BJ (cell line): ENCODE measurements at regions of chr18 and their contacts with region 1.

Region 1: GRCh38 chr18:75612456-75612855 is 185.0 kb upstream of the SMIM21 start:
- DNase-seq: no peak
- H3K4me3 ChIP-seq: no peak overlapping the region
- H3K27me3 ChIP-seq: no peaks in the 10 kb centered on the region
- CTCF ChIP-seq: no peak

Region 2: GRCh38 chr18:75507636-75508035 is 104.8 kb before region 1 on chr18:
- CTCF ChIA-PET with region 1: no interaction called
- POLR2A ChIA-PET with region 1: no interaction called
- DNase-seq: no peak
- H3K4me3 ChIP-seq: no peak overlapping the region
- H3K27me3 ChIP-seq: no peaks in the 10 kb centered on the region; the same call in 1 of the 2 replicates
- CTCF ChIP-seq: no peak

Region 3: DNA sequence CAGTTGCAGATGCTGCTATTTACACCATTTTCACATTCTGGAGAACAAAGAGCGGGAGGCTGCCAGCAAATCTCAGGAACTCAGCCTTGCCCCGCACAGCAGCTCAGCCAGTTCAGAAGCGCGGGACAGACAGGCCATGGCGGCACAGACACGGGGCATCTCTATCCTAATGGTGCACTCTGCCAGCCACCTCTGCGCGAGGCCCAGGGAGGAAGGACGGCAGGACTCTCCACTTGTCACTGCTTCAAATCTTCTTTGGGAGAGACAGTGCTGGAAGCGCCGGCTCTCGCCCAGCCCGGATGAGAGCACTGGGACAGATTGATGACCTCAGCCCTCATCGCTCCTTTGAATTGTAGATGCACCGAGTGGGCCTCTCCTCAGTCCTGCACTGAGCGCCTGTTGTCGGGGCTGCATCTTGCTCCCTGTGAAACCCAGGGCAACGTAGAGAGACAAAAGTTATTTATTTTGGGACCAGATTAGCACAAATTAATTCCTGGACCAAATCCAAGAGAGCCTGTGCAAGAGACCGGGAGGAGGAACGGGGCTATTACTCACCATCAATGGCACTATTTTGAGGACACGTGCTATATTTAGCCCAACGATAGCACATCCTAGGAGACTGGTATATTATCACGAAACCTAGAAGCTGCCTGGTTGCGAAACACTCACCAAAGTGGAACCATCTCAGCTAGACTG is 26.5 kb after region 1 on chr18:
- CTCF ChIA-PET with region 1: no interaction called
- POLR2A ChIA-PET with region 1: interaction called, 12 read pairs
- DNase-seq: peak; percentile 25
- H3K4me3 ChIP-seq: peak overlapping the region; percentile 34
- H3K27me3 ChIP-seq: peaks cover 2% of the 10 kb centered on the region
- CTCF ChIP-seq: no peak

Region 4: GRCh38 chr18:75784398-75784789 is 171.9 kb after region 1 on chr18:
- CTCF ChIA-PET with region 1: no interaction called
- POLR2A ChIA-PET with region 1: no interaction called
- DNase-seq: no peak
- H3K4me3 ChIP-seq: no peak overlapping the region
- H3K27me3 ChIP-seq: 0 out of 2 replicates have a peak, but pooled peaks cover 3% of the 10 kb centered on the region
- CTCF ChIP-seq: no peak